SK-MEL-5 (cell line): ENCODE measurements at regions of chr3 and their contacts with region 1.

Region 1: DNA sequence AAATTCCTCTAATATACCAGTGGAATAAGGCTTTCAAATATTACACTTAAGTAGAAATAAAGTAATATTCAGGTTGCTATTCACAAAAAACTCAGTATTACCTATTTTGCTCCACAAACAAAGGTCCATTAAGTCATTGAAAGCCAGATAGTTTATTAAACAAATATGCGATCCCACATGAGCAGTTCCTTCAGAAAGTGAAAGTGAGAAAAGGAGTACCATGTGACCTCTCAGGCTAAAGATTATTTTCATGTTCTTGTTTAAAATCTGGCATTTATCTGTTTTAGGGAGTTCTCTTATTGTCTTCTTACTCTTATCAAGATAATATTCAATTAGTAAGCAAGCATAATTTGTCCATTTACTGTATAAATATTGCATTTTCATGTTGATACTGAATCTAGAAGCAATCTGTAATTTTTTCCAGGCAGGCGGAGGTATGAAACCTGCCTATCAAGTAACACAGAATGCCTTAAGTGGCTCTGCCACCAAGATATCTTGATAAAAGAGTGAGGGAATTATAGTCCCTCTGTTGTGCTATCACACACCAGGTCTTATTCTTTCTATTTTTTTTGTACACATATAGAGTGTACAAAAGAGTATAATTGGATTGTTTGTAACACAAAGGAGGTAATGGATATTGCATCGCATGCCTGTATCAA is 20.1 kb upstream of the PLSCR5 start:
- DNase-seq: peak; percentile 54

Region 2: DNA sequence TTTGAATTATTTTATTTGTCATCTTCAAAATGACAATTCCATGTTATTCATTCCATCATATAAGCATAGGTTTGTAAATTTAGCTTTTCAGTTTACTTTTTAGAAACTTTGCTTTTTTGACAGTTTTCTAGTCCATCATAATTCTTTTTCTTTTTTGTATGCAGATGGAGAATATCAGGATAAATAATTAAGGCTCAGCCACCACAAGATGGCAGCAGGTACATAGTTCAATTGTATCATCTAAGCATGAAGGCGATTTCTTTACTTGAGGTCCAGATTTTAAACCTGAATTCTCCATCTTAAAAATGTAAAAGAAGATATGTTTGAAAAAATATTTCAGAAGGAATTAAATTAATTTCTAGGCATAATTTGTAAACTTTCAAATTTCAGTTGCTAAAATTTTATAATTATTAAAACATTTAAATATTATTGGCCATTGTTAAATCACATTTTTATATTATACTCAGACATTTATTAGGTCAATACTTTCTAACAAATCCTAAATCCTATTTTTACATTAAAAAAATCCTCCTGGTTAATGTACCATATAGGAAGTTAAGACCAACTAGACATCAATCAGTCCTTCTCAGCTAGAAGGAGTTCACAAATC is 35.2 kb before region 1 on chr3:
- in situ Hi-C with region 1: loop called (anchors 5 kb)
- DNase-seq: peak; percentile 75

Region 3: DNA sequence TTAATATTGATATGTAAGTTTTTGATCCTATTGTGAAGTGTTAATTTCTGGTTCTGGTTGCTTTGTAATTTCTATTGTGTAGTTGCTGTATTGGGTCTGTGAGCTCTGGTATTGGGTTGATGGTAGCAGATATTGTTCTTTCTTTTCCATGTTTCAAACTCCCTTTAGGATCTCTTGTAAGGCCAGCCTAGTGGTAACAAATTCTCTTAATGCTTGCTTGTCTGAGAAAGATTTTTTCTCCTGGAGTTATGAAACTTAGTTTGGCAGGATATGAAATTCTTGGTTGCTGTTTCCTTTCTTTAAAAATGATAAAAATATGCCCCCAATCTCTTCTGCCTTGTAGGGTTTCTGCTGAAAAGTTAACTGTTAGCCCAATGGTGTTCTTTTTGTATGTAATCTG is 248.5 kb after region 1 on chr3:
- in situ Hi-C with region 1: no loop called
- DNase-seq: no peak